Activated CD4-positive, alpha-beta T cell treated with anti-CD3 and anti-CD28 coated beads for 36 hours (primary cell): ENCODE measurements at regions of chr17 and their contacts with region 1.

Region 1: GRCh38 chr17:4806777-4807604 is at the start of gene PLD2:
- DNase-seq: peak; percentile 93
- ATAC-seq: peak; percentile 98
- H3K4me3 Mint-ChIP-seq: peak within 1 kb of the TSS; percentile 73
- H3K27ac Mint-ChIP-seq: no peak within 1 kb of the TSS
- H3K4me1 Mint-ChIP-seq: peaks cover 7% of the 10 kb centered on the region
- H3K27me3 Mint-ChIP-seq: no peaks in the 10 kb centered on the region
- total RNA-seq, gene PLD2: 12.3 to 14.1 TPM

Region 2: DNA sequence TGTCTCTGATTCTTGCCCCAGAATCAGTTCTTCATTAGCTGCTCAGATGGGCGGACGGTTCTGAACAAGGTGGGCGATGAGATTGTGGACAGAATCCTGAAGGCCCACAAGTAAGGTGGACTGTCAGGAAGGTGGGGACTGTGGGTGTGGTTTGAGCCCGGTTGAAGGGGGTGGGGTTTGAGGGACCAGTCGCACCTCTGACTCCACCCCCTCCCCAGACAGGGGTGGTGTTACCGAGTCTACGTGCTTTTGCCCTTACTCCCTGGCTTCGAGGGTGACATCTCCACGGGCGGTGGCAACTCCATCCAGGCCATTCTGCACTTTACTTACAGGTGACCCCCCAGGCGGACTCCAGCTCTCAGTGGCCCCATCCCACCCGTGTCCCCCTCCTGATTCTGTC is 11.3 kb after region 1 on chr17:
- CTCF ChIA-PET with region 1: no interaction called
- POLR2A ChIA-PET with region 1: no interaction called
- intact Hi-C with region 1: no loop called
- DNase-seq: no peak
- ATAC-seq: no peak
- H3K4me3 Mint-ChIP-seq: no peak overlapping the region
- H3K27ac Mint-ChIP-seq: no peak overlapping the region
- H3K4me1 Mint-ChIP-seq: no peaks in the 10 kb centered on the region
- H3K27me3 Mint-ChIP-seq: no peaks in the 10 kb centered on the region

Region 3: GRCh38 chr17:4903051-4903818 is 96.2 kb after region 1 on chr17 and contains the start of gene CHRNE:
- CTCF ChIA-PET with region 1: interaction called, 4 read pairs
- POLR2A ChIA-PET with region 1: no interaction called
- intact Hi-C with region 1: loop called in 1 of 2 experiments (anchors 1 kb)
- DNase-seq: peak; percentile 89
- ATAC-seq: peak; percentile 44
- H3K4me3 Mint-ChIP-seq: peak within 1 kb of the TSS; percentile 65
- H3K27ac Mint-ChIP-seq: peak within 1 kb of the TSS; percentile 72
- H3K4me1 Mint-ChIP-seq: peaks cover 26% of the 10 kb centered on the region
- H3K27me3 Mint-ChIP-seq: no peaks in the 10 kb centered on the region
- total RNA-seq, gene CHRNE: 0.59 to 0.84 TPM

Region 4: GRCh38 chr17:5816491-5817070 is 1009.6 kb after region 1 on chr17:
- CTCF ChIA-PET with region 1: no interaction called
- POLR2A ChIA-PET with region 1: no interaction called
- intact Hi-C with region 1: no loop called
- DNase-seq: no peak
- ATAC-seq: no peak
- H3K4me3 Mint-ChIP-seq: no peak overlapping the region
- H3K27ac Mint-ChIP-seq: no peak overlapping the region
- H3K4me1 Mint-ChIP-seq: no peaks in the 10 kb centered on the region
- H3K27me3 Mint-ChIP-seq: peaks cover 27% of the 10 kb centered on the region